ENCODE measurements at regions of chr12 and their contacts with region 1.

Region 1: DNA sequence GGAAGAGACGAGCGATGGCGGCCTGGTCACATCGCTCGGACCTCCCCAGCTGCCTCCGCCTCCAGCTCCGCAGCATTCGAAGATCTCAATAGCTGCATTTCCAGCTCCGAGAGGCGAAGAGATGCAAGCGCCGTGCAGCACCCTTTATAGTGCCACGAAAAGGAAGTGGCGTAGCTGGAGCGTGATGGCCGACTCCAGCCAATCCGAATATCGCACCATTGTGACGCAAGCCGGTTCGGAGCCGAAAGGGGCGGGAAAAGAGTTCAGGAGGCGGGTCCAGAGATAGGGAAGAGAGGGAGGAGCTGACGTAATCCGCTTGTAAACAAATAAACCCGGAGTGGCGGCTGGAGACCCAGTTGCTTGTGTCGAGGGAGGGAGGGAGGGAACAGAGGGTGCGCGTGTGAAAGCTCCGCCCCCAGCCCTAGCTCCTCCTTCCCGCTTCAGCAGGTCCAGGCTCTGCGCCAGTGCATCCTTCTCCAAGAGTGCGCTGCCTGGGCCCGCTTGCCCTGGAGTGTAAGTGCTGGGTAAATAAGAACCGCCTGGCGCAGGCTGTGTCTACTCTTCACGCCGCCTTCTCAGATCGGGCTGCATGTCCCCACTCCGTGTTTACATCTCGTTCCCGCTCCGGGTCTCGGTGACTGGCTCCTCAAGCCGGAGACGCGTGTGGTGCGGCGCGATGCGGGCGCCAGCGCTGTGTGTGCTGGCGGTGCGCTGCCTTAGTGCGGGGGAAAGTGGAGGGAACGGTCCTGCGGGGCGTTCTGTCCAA is at the start of gene BTG1:
- DNase-seq: peak; percentile 97 to 99 (median 99)
- ATAC-seq: peak; percentile 92 to 94
- H3K4me3 ChIP-seq: peak within 1 kb of the TSS; percentile 92
- H3K27ac ChIP-seq: peak within 1 kb of the TSS; percentile 98
- H3K4me1 ChIP-seq: no peaks in the 10 kb centered on the region
- H3K27me3 ChIP-seq: no peaks in the 10 kb centered on the region
- total RNA-seq, gene BTG1: 95.7 to 147 (median 134) TPM

Region 2: DNA sequence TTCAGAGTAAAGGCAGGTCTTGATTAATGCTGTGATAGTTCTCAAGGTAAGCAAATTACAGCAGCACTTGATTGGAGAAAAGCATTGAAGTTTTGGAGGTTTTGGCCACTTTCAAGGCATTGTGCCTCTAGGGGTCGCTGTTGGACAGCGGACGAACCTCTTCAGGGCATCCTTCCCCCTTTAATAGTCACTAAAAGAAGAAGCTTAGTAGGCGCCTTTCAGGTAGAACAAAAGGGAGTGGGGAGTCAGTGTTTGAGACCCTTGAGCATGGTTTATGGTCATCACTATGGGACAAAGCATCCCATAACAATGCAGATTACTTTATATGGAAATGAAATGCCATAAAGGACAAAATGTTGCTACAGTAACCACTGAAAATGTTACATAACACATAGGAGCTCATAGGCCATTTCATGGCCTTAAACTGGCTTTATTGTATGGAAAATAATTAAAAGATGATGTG is 763.8 kb before region 1 on chr12:
- intact Hi-C with region 1: loop called in 1 of 4 experiments (anchors 10 kb)
- DNase-seq: peak; percentile 85 to 94 (median 87)
- ATAC-seq: peak; percentile 85 to 89
- H3K4me3 ChIP-seq: peak overlapping the region; percentile 53
- H3K27ac ChIP-seq: no peak overlapping the region
- H3K4me1 ChIP-seq: peaks cover 2% of the 10 kb centered on the region
- H3K27me3 ChIP-seq: no peaks in the 10 kb centered on the region

Region 3: DNA sequence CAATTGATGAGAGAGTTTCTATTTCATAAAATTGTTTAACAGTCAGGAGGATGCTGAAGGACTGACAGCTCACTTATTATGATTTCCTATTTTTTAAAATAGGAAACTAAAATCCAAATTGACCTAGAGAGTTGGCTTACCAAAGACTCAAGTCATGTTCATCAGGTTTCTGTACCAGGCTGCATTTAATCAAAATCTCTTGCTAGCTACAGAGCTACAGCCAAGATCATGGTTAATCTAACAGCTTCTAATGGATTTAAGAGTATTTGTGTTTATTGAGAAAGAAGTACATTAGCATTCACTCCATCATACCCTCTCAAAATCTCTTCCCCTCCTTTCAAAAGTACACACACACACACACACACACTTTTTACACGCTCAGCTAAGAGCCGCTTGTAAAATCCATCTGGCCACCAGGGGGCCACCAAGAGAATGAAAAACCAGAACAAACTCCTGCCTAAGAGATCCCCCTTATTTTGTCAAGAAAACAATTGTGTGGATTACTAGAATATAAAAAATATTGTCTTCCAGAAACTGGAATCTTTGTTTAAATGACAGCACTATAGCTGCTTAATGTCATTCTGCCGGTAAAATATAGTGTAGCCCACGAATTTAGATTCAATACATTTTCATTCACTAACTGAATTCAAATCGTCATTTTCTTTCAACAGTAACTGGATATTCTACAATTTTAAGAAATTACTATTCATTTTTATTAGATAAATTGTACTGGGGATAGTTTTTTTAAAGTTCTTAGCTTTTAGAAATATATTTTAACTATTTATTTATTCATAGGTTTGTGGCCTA is 334.2 kb before region 1 on chr12:
- intact Hi-C with region 1: loop called (anchors 5 to 10 kb)
- DNase-seq: peak; percentile 67 to 91 (median 87)
- ATAC-seq: peak; percentile 66 to 76
- H3K4me3 ChIP-seq: no peak overlapping the region
- H3K27ac ChIP-seq: no peak overlapping the region
- H3K4me1 ChIP-seq: no peaks in the 10 kb centered on the region
- H3K27me3 ChIP-seq: no peaks in the 10 kb centered on the region

Region 4: DNA sequence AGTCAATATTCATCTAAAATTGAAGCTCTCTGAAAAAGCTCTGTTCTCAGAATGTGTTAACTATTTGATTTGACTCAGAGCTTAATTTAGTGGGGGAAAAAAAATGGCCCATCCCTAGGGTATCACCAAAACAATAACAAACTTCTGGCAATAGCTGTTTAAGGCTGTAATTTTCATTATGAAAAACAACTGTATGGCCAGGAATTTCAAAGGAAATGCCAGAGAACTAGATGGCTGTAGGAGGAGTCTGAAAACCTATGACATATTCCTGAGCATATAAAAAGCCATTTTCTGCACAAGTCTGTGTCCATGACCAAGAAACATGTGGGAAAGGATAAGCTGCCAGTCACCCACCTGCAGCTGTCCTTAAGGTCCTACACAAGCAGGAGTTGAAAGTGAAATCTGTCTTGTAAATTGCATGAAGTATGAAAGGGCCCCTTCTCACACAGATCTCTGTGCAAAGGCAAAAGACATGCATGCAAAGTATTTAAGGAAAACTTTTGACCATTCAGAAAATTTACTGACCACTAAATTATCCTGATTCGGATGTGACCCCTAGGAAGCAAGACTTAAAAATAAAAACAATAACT is 299.4 kb before region 1 on chr12:
- intact Hi-C with region 1: no loop called
- DNase-seq: no peak
- ATAC-seq: no peak
- H3K4me3 ChIP-seq: no peak overlapping the region
- H3K27ac ChIP-seq: no peak overlapping the region
- H3K4me1 ChIP-seq: no peaks in the 10 kb centered on the region
- H3K27me3 ChIP-seq: no peaks in the 10 kb centered on the region

Region 5: GRCh38 chr12:92244036-92244435 is 98.1 kb after region 1 on chr12:
- intact Hi-C with region 1: loop called in 1 of 4 experiments (anchors 5 kb)
- DNase-seq: no peak
- ATAC-seq: peak; percentile 92 to 93
- H3K4me3 ChIP-seq: peak overlapping the region; percentile 15
- H3K27ac ChIP-seq: peak overlapping the region; percentile 68
- H3K4me1 ChIP-seq: peaks cover 7% of the 10 kb centered on the region
- H3K27me3 ChIP-seq: no peaks in the 10 kb centered on the region

Region 6: GRCh38 chr12:92414170-92415070 is 268.5 kb after region 1 on chr12:
- intact Hi-C with region 1: loop called in 3 of 4 experiments (anchors 10 kb)
- DNase-seq: no peak
- ATAC-seq: no peak
- H3K4me3 ChIP-seq: no peak overlapping the region
- H3K27ac ChIP-seq: no peak overlapping the region
- H3K4me1 ChIP-seq: peaks cover 5% of the 10 kb centered on the region
- H3K27me3 ChIP-seq: no peaks in the 10 kb centered on the region